Ascending aorta (tissue), 2 donors: ENCODE measurements at regions of chrX and their contacts with region 1.

Region 1: GRCh38 chrX:101415180-101416145 is 7.4 kb downstream of the HNRNPH2 start:
- DNase-seq: no peak
- H3K4me3 ChIP-seq: no peak overlapping the region
- H3K27ac ChIP-seq: peak overlapping the region; percentile 54 to 63
- H3K4me1 ChIP-seq: peaks cover 0 to 4% of the 10 kb centered on the region in 2 donors
- H3K27me3 ChIP-seq: no peaks in the 10 kb centered on the region
- CTCF ChIP-seq: peak; percentile 60 to 82 (median 77)

Region 2: DNA sequence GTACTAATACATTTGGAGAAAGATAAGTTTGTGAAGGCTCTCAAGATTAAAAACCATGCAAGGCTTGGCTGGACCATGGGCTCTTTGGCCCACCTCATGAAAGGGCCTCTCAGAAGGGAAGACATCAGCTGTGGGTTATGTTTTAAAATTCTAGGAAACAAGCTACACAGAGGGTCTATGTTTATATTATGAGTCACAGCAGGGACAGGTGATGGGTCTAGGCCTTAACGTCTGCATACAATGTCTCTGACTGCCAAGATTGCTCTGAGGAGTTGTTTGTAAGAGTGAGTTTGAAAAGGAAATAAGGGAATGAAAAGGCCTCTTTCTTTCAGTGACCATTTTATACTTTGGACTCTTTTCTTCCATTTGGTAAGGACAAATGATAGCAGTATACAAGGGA is 321.2 kb after region 1 on chrX:
- intact Hi-C with region 1: no loop called
- DNase-seq: no peak
- H3K4me3 ChIP-seq: no peak overlapping the region
- H3K27ac ChIP-seq: no peak overlapping the region
- H3K4me1 ChIP-seq: no peaks in the 10 kb centered on the region
- H3K27me3 ChIP-seq: no peaks in the 10 kb centered on the region
- CTCF ChIP-seq: no peak

Region 3: GRCh38 chrX:101799387-101799786 is 383.9 kb after region 1 on chrX:
- intact Hi-C with region 1: loop called (anchors 2 kb)
- DNase-seq: peak; percentile 54 to 91
- H3K4me3 ChIP-seq: no peak overlapping the region
- H3K27ac ChIP-seq: no peak overlapping the region
- H3K4me1 ChIP-seq: no peaks in the 10 kb centered on the region
- H3K27me3 ChIP-seq: no peaks in the 10 kb centered on the region
- CTCF ChIP-seq: peak; percentile 51 to 75 (median 71)

Region 4: GRCh38 chrX:101993335-101993734 is 577.9 kb after region 1 on chrX:
- intact Hi-C with region 1: no loop called
- DNase-seq: no peak
- H3K4me3 ChIP-seq: no peak overlapping the region
- H3K27ac ChIP-seq: no peak overlapping the region
- H3K4me1 ChIP-seq: no peaks in the 10 kb centered on the region
- H3K27me3 ChIP-seq: no peaks in the 10 kb centered on the region
- CTCF ChIP-seq: no peak

Region 5: GRCh38 chrX:102129473-102129872 is 714.0 kb after region 1 on chrX:
- intact Hi-C with region 1: loop called (anchors 10 kb)
- DNase-seq: no peak
- H3K4me3 ChIP-seq: no peak overlapping the region
- H3K27ac ChIP-seq: no peak overlapping the region
- H3K4me1 ChIP-seq: no peaks in the 10 kb centered on the region
- H3K27me3 ChIP-seq: no peaks in the 10 kb centered on the region
- CTCF ChIP-seq: peak in 2 of 3 experiments; percentile 26 to 37

Region 6: GRCh38 chrX:102659790-102660757 is 1244.6 kb after region 1 on chrX:
- intact Hi-C with region 1: loop called (anchors 10 kb)
- DNase-seq: peak; percentile 64 to 91
- H3K4me3 ChIP-seq: peak overlapping the region; percentile 48 to 63
- H3K27ac ChIP-seq: peak overlapping the region in 1 of 2 donors; percentile 44
- H3K4me1 ChIP-seq: no peaks in the 10 kb centered on the region
- H3K27me3 ChIP-seq: no peaks in the 10 kb centered on the region
- CTCF ChIP-seq: peak in 1 of 3 experiments; percentile 26